Activated B cell treated with CpG ODN at 0.5 μM for 24 hours (primary cell): ENCODE measurements at regions of chr2 and their contacts with region 1.

Region 1: GRCh38 chr2:55718165-55719008 is 24.7 kb upstream of the PNPT1 start:
- DNase-seq: no peak
- ATAC-seq: no peak
- H3K4me3 Mint-ChIP-seq: no peak overlapping the region
- H3K27ac Mint-ChIP-seq: no peak overlapping the region
- H3K4me1 Mint-ChIP-seq: no peaks in the 10 kb centered on the region
- H3K27me3 Mint-ChIP-seq: peaks cover 5% of the 10 kb centered on the region
- CTCF ChIP-seq: peak; percentile 55

Region 2: GRCh38 chr2:55801436-55801835 is 83.0 kb after region 1 on chr2:
- CTCF ChIA-PET with region 1: no interaction called
- POLR2A ChIA-PET with region 1: no interaction called
- intact Hi-C with region 1: no loop called
- DNase-seq: no peak
- ATAC-seq: no peak
- H3K4me3 Mint-ChIP-seq: no peak overlapping the region
- H3K27ac Mint-ChIP-seq: no peak overlapping the region
- H3K4me1 Mint-ChIP-seq: no peaks in the 10 kb centered on the region
- H3K27me3 Mint-ChIP-seq: peaks cover 2% of the 10 kb centered on the region
- CTCF ChIP-seq: no peak

Region 3: DNA sequence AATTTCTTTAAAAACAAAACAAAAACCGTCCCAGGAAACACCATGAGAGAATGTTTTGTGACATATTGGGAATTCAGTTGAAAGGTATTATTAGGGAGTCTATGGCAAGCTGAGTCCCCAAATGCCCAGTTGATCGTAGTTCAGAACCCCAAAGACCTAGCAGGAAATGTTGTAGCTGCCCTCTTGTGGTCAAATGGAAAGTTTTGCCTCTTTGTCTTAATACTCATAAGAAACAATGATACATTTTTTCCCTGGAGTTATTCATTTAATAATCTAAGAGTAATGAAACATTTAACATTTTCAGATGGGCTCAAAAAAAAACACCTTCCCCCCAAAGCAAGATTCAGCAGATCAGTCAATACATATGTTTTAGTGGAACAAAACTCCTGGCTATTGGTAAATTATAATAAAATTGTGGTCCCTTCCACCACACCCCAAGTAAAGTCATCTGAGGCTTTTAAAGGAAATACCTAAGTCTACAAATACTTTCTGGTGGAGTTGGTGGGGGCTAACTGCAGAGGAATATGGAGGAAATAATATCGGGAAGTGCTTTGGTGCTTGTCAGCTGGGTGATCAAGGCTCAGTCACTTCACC is 243.0 kb after region 1 on chr2:
- CTCF ChIA-PET with region 1: interaction called, 6 read pairs
- POLR2A ChIA-PET with region 1: no interaction called
- intact Hi-C with region 1: loop called (anchors 1 kb)
- DNase-seq: no peak
- ATAC-seq: no peak
- H3K4me3 Mint-ChIP-seq: no peak overlapping the region
- H3K27ac Mint-ChIP-seq: no peak overlapping the region
- H3K4me1 Mint-ChIP-seq: no peaks in the 10 kb centered on the region
- H3K27me3 Mint-ChIP-seq: peaks cover 7% of the 10 kb centered on the region
- CTCF ChIP-seq: no peak

Region 4: GRCh38 chr2:55968941-55969340 is 250.6 kb after region 1 on chr2:
- CTCF ChIA-PET with region 1: interaction called, 5 read pairs
- POLR2A ChIA-PET with region 1: no interaction called
- intact Hi-C with region 1: loop called (anchors 2 kb)
- DNase-seq: no peak
- ATAC-seq: no peak
- H3K4me3 Mint-ChIP-seq: no peak overlapping the region
- H3K27ac Mint-ChIP-seq: no peak overlapping the region
- H3K4me1 Mint-ChIP-seq: no peaks in the 10 kb centered on the region
- H3K27me3 Mint-ChIP-seq: peaks cover 13% of the 10 kb centered on the region
- CTCF ChIP-seq: no peak

Region 5: DNA sequence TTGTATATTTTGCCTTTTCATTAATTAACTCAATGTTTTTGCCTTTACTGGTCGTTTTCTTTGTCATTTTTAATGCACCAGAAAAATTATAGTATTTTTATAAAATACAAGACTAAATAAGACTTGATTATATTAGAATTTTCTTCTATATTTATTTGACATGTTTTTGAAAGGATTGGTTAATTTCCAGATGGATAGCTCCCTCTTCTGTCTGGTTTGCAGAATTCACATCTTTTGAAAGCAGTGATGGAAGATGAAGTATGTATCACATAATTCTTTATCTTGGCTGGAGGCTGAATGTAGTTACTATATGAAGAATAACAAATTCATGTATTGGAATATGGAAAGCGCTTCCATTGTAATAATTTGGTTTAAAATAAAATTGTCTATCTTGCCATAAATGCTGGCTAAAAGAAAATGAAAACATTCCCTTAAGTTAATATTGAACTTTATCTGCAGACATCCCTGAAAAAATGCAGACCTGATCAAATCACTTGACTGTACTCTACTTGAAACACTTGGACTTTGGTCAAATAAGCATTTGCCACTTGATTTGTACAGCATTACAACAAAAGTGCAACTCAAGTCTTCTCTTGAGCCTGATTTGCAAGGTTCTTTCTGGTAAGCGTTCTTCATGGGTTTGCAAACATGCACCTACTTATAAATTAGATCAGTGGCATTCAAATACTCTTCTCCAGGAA is 291.5 kb after region 1 on chr2:
- CTCF ChIA-PET with region 1: no interaction called
- POLR2A ChIA-PET with region 1: no interaction called
- intact Hi-C with region 1: loop called (anchors 1 kb)
- DNase-seq: no peak
- ATAC-seq: no peak
- H3K4me3 Mint-ChIP-seq: no peak overlapping the region
- H3K27ac Mint-ChIP-seq: no peak overlapping the region
- H3K4me1 Mint-ChIP-seq: no peaks in the 10 kb centered on the region
- H3K27me3 Mint-ChIP-seq: peaks cover 3% of the 10 kb centered on the region
- CTCF ChIP-seq: no peak

Region 6: GRCh38 chr2:56132138-56132537 is 413.8 kb after region 1 on chr2:
- CTCF ChIA-PET with region 1: no interaction called
- POLR2A ChIA-PET with region 1: no interaction called
- intact Hi-C with region 1: loop called (anchors 1 kb)
- DNase-seq: no peak
- ATAC-seq: no peak
- H3K4me3 Mint-ChIP-seq: no peak overlapping the region
- H3K27ac Mint-ChIP-seq: no peak overlapping the region
- H3K4me1 Mint-ChIP-seq: no peaks in the 10 kb centered on the region
- H3K27me3 Mint-ChIP-seq: no peaks in the 10 kb centered on the region
- CTCF ChIP-seq: no peak

Region 7: DNA sequence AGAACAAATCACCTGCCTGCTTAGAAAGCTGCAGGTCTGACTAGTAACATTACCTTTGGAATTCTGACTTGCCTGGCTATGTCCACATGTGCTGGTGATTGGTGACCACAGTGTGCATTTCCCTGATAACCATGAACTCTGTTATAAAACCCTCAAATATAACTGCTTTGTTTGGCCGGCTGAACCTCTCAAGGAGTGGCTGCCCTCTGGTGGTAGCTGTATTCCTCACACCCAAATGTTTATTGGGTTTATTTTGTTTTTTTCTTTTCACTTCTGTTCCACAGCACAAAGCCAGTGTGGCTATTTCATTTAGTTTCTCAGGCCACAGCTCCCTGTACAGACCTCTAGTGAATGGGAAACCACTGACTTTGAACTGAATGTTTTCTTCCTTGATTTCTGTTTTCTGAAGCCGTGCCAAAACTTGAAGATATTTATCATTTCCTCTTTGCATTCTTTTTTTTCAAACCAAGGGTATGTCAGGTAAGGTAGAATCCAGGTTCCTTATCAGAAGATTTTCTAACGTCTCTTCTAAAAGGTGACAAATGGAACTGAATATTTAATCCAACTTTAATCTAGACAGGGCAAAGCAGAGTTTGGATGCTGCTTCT is 1779.2 kb after region 1 on chr2:
- CTCF ChIA-PET with region 1: no interaction called
- POLR2A ChIA-PET with region 1: no interaction called
- intact Hi-C with region 1: loop called (anchors 1 kb)
- DNase-seq: no peak
- ATAC-seq: no peak
- H3K4me3 Mint-ChIP-seq: no peak overlapping the region
- H3K27ac Mint-ChIP-seq: no peak overlapping the region
- H3K4me1 Mint-ChIP-seq: peaks cover 2% of the 10 kb centered on the region
- H3K27me3 Mint-ChIP-seq: no peaks in the 10 kb centered on the region
- CTCF ChIP-seq: peak; percentile 21

Region 8: DNA sequence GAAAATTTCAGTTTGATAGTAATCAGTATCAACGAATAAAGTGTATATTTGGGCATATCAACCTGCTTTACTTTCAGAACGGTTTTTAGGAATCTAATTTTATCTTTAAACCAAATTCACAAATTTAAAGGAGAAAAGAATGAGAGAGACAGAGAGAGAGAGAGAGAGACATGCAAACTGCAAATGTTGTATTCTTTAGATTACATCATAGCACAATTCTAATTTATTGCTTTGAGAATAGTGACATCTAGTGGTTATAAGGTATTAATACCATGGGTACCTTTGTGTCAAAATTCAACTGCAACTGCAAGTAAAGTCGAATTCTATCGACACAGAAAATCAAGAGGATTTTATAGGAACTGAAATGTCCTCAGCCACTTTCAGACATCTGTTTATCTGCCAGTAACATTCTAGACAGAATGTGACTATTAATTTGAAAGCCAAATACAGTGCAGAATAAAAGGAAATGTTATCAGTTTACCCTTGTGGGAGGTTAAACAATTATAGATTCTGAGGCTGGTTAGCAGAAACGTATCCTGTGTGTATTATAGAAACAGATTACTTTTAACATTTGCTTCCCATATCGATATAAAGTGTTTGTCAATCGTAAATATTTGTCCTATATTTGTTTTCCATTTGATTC is 1798.4 kb after region 1 on chr2:
- CTCF ChIA-PET with region 1: no interaction called
- POLR2A ChIA-PET with region 1: no interaction called
- intact Hi-C with region 1: loop called (anchors 1 kb)
- DNase-seq: no peak
- ATAC-seq: no peak
- H3K4me3 Mint-ChIP-seq: no peak overlapping the region
- H3K27ac Mint-ChIP-seq: no peak overlapping the region
- H3K4me1 Mint-ChIP-seq: no peaks in the 10 kb centered on the region
- H3K27me3 Mint-ChIP-seq: no peaks in the 10 kb centered on the region
- CTCF ChIP-seq: peak; percentile 44